Activated CD4-positive, alpha-beta T cell treated with anti-CD3 and anti-CD28 coated beads, Interleukin-2, amount 10 ng/mL, durations not matched to agents 24 days and 14 days (primary cell): ENCODE measurements at regions of chrX and their contacts with region 1.

Region 1: DNA sequence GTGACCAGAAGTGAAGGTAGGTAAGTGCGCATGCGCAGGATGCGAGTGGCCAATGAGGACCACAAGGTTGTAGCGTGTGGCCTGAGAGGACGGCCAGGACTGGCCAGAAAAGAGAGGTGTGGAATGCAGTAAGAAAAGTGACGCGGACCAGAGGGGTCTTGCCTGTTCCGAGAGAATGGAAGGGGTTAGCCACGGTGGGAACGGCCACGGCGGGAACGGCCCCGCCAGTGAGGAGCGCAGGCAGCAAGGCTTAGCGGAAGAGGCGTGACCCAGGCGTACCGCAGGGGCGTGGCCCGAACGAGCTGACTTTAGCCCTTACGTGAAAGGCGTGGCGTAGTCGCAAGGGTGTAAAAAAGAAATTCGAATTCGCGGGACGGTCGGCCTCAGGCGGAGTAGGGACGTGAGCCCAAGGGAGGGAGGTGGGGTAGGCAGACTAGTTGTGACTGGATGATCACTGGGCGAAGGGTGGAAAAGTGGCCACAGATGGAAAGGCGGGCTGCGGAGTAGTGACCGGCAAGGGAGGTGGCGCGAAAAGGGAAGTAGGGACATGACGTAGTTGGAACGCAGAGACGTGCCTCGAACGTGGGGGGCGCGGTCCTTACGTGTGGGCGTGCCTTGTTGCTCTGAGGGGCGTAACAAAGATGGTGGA is 10.4 kb upstream of the CLTRN start:
- DNase-seq: peak; percentile 94
- H3K4me3 Mint-ChIP-seq: no peak overlapping the region
- H3K27ac Mint-ChIP-seq: no peak overlapping the region
- H3K4me1 Mint-ChIP-seq: peaks cover 11% of the 10 kb centered on the region
- H3K27me3 Mint-ChIP-seq: peaks cover 2% of the 10 kb centered on the region

Region 2: DNA sequence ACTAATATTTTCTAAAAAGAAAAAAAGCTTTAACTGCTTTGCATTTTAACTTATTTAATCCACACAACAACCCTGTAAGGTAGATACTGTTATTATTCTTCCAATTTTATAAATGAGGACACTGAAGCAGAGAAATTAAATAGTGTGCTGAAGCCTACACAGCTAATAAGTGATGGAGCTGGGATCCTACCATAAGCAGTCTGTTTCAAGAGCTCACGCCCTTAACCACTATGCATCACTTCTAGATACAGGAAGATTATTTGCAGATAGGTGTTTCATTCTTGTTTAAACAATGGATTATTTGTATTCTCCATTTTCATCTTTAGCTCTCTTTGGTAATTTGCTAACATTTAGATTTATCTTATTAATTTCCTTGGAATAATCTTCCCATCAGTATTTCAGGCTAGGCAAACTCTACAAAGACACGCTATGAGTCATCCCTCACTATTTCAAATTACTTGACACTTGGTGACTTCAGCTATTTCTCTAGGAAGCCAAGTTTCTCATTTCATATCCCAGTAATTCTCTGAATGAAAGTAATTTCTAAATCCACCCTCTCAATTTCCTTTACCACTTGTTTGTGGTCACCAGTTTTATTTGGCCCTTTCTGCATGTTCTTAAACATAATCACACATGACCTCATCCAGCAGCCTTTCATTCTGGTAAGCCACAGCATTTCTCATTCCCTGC is 472.4 kb before region 1 on chrX:
- intact Hi-C with region 1: loop called (anchors 5 kb)
- DNase-seq: peak; percentile 56
- H3K4me3 Mint-ChIP-seq: no peak overlapping the region
- H3K27ac Mint-ChIP-seq: no peak overlapping the region
- H3K4me1 Mint-ChIP-seq: peaks cover 32% of the 10 kb centered on the region
- H3K27me3 Mint-ChIP-seq: peaks cover 5% of the 10 kb centered on the region

Region 3: DNA sequence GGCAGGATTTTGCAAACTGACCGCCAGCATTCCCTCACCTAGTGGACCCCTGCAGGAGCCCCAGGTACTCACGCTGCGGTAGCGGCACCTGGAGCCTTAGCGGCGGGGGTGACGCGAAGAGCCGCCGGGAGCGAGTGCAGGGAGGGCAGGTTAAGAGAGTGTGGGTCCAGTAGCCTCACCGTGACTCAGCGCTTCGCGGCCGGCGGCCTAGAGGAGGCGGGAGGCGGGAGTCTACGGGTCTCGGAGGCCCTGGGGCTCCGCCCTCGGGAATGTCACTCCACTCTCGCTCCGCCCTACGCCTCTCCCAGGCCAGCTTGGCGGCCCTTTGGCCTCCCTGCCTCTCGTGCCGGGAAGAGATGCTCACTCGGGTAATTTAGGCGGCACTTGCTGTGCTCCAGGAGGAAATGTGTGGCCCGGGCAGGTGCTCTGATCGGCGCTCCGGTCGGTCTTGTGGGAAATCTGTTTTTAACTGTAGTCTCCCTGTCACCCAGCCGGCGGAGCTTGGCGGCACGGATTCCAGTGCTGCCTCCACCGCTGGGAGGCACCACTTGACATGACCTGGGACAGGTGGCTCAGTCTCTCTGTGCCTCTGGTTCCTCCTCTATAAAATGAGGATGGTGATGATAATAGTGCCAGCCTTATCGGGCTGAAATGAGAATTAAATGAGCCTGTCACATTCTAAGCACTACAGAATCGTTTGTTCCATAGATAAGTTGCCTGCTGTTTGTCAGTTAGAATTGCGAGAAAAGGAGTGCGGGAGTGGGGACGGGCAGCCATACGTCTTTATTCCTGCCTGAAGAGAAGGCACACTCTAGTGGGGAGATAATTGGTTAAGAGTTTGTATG is 181.6 kb before region 1 on chrX and contains the start of gene PIR:
- intact Hi-C with region 1: loop called (anchors 1 kb)
- DNase-seq: peak; percentile 85
- H3K4me3 Mint-ChIP-seq: peak within 1 kb of the TSS; percentile 86
- H3K27ac Mint-ChIP-seq: peak within 1 kb of the TSS; percentile 79
- H3K4me1 Mint-ChIP-seq: peaks cover 10% of the 10 kb centered on the region
- H3K27me3 Mint-ChIP-seq: peaks cover 5% of the 10 kb centered on the region
- total RNA-seq, gene PIR: 3.1 and 4.2 TPM in 2 replicates

Region 4: GRCh38 chrX:15789979-15790768 is 115.2 kb after region 1 on chrX and contains the start of gene ZRSR2:
- intact Hi-C with region 1: loop called (anchors 1 kb)
- DNase-seq: peak; percentile 96
- H3K4me3 Mint-ChIP-seq: no peak within 1 kb of the TSS
- H3K27ac Mint-ChIP-seq: no peak within 1 kb of the TSS
- H3K4me1 Mint-ChIP-seq: peaks cover 9% of the 10 kb centered on the region
- H3K27me3 Mint-ChIP-seq: no peaks in the 10 kb centered on the region
- total RNA-seq, gene ZRSR2: 20.0 and 20.3 TPM in 2 replicates

Region 5: DNA sequence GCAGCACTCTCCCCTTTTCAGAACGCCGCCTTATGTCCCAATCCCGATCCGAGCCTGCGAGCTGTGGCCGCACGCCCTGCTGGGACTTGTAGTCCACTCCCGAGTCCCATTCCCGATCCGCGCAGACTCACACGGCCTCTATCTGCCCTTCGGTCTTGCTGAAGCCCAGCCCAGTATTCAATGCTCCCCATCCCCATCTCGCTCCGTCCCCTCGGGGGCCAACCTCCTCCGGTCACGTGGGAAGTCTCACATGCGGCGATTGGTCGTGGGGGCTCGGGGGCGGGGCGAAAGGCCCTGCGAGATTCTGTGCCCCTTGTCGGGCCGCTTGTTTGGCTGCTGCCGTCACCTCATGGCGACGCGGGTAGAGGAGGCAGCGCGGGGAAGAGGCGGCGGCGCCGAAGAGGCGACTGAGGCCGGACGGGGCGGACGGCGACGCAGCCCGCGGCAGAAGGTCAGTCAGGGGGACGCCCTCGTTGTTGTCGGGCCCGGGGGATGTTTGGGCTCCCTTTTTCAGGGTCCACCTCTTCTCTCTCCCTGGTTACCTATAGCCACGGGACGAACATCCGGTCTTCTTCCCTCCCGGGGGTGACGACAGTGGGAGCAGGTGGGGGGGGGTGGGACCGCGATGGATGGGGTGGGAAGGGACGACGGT is 1111.3 kb after region 1 on chrX and contains the start of gene TXLNG:
- intact Hi-C with region 1: loop called (anchors 10 kb)
- DNase-seq: peak; percentile 97
- H3K4me3 Mint-ChIP-seq: peak within 1 kb of the TSS; percentile 99
- H3K27ac Mint-ChIP-seq: peak within 1 kb of the TSS; percentile 96
- H3K4me1 Mint-ChIP-seq: peaks cover 11% of the 10 kb centered on the region
- H3K27me3 Mint-ChIP-seq: no peaks in the 10 kb centered on the region
- total RNA-seq, gene TXLNG: 23.4 and 24.4 TPM in 2 replicates